ENCODE measurements at regions of chr6 and their contacts with region 1.

Region 1: DNA sequence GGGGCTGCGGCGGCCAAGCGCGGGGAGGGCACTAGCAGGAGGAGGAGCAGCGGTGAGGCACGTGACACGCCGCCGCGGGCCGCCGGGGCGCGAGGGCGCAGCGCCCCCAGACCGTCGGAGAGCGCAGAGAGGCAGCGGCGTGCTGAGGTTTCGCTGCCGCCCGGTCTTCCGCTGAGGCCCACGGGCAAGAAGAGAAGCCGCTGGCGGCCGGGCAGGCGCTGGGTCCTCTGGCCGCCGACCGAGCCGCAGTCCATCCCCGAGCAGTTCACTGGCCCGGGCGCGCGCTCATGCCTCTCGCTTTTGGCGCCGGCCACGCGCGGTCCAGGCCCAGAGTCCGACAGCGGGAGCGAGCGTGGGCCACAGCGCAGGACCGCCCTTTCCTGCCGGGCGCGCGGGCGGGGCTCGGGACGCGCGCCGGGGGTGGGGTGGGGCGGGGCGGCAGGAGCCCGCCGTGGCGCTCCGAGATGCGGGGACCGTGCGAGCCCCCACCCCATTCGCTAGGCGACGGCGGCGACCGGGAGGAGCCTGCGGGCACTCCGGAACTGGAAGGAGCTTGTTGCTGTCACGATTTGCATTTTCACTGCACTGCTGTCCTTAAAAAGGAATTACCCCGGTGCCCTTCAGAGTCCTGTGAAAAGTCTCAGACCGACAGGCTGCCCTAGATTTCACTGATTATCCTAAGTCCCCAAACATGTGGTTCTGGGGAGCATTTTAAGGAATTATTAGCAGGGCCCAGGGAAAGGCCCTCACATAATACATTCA is at the start of gene MCUR1:
- H3K4me3 Mint-ChIP-seq: peak within 1 kb of the TSS; percentile 88
- H3K27ac Mint-ChIP-seq: peak within 1 kb of the TSS; percentile 90
- H3K4me1 Mint-ChIP-seq: peaks cover 29% of the 10 kb centered on the region
- H3K27me3 Mint-ChIP-seq: no peaks in the 10 kb centered on the region

Region 2: GRCh38 chr6:13711733-13712598 is 102.4 kb before region 1 on chr6 and contains the start of gene RANBP9:
- intact Hi-C with region 1: loop called (anchors 1 kb)
- H3K4me3 Mint-ChIP-seq: peak within 1 kb of the TSS; percentile 94
- H3K27ac Mint-ChIP-seq: peak within 1 kb of the TSS; percentile 98
- H3K4me1 Mint-ChIP-seq: peaks cover 66% of the 10 kb centered on the region
- H3K27me3 Mint-ChIP-seq: no peaks in the 10 kb centered on the region

Region 3: DNA sequence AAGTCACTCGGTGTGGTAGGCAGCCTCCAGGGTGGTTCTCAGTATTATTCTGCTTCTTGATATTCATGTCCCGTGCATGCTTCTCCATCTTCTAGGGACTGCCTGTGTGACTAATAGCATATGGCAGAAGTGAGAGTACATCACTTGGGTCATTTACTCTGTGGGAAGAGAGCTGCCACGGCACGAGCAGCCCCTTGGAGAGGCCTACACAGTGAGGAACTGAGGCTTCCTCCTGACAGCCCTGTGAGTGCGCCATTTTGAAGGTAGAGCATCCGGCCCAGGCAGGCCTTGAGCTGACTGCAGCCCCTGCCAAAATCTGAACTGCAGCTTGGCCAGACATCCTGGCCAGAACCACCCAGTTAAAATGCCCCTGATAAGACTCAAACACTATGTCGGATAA is 17.3 kb after region 1 on chr6:
- intact Hi-C with region 1: loop called (anchors 2 kb)
- H3K4me3 Mint-ChIP-seq: no peak overlapping the region
- H3K27ac Mint-ChIP-seq: peak overlapping the region; percentile 74
- H3K4me1 Mint-ChIP-seq: peaks cover 61% of the 10 kb centered on the region
- H3K27me3 Mint-ChIP-seq: peaks cover 1% of the 10 kb centered on the region

Region 4: DNA sequence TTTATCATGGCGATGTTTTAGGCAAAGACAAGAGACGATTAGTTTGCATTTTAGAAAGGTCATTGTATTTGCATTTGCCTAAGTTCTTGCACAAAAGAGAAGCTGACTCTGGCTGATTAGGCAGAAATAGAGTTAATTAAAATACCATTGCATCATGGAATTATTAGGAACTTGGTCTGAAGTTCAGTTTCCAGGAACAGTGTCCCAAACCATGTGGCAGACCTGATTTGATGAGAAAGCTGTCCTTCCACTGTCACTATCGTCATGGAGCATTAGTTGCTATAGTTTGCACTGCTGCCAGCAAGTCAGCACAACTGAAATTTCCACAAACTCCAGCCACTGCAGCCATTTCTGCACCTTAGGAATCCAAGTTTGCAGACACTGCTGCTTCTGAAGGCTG is 24.3 kb after region 1 on chr6:
- intact Hi-C with region 1: loop called (anchors 2 kb)
- H3K4me3 Mint-ChIP-seq: no peak overlapping the region
- H3K27ac Mint-ChIP-seq: peak overlapping the region; percentile 91
- H3K4me1 Mint-ChIP-seq: peaks cover 58% of the 10 kb centered on the region
- H3K27me3 Mint-ChIP-seq: peaks cover 1% of the 10 kb centered on the region

Region 5: GRCh38 chr6:13873285-13874190 is 59.2 kb after region 1 on chr6:
- intact Hi-C with region 1: loop called (anchors 5 kb)
- H3K4me3 Mint-ChIP-seq: peak overlapping the region; percentile 74
- H3K27ac Mint-ChIP-seq: peak overlapping the region; percentile 91
- H3K4me1 Mint-ChIP-seq: peaks cover 25% of the 10 kb centered on the region
- H3K27me3 Mint-ChIP-seq: peaks cover 13% of the 10 kb centered on the region

Measured in dendritic cell treated with granulocyte-macrophage colony-stimulating factor and Interleukin-4, amounts not matched to agents 40 ng/mL and 50 ng/mL, for 4 days (primary cell).